Caco-2 (cell line): ENCODE measurements at regions of chr1 and their contacts with region 1.

Region 1: DNA sequence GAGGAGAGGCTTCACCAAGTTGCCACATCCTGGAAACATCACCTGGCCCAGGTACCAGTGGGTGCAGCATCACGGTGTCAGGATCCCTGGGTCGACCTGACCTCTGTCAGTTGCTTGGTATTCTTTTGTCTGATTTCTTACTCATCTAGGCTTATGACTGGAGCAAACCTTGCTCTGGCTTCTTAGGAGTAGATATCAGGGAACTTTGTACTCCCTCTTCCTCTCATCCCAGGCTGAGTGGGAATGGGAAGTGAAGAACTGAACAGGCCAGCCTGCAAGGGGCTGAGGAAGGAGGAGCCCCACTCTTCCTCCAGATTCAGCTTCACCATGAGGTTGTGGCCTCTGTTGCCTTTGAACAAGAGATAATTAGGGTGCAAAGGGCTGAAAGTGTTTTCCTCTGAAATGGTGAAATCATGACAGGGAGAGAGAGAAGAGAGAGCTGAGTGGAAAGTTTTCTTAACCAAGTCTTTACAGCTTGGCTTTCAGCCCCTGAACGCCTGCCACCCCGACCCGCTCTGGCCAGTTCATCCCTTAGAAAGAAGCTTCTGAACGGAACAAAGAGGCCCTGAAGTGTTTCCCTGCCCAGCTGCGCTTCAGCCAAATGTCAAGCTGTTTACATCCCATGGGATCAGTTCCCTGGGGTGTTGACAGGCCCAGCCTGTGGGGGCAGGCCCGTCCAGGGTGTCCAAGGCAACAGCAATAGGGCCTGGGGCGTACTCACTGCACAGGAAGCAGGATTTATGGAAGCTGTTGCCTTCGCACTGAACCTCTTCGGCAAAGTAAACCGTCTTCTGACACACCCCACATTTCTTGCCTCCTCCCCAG is 11.2 kb downstream of the CSRP1 start:
- DNase-seq: no peak
- H3K4me3 ChIP-seq: no peak overlapping the region
- H3K4me3 Mint-ChIP-seq: no peak overlapping the region
- H3K27ac Mint-ChIP-seq: no peak overlapping the region
- H3K4me1 ChIP-seq: peaks cover 21% of the 10 kb centered on the region
- H3K4me1 Mint-ChIP-seq: peaks cover 18% of the 10 kb centered on the region
- H3K27me3 ChIP-seq: no peaks in the 10 kb centered on the region
- H3K27me3 Mint-ChIP-seq: no peaks in the 10 kb centered on the region
- CTCF ChIP-seq: no peak

Region 2: GRCh38 chr1:201506556-201507359 is 11.1 kb after region 1 on chr1 and contains the start of gene CSRP1:
- CTCF ChIA-PET with region 1: interaction called, 13 read pairs
- POLR2A ChIA-PET with region 1: interaction called, 3 read pairs
- intact Hi-C with region 1: loop called (anchors 1 kb)
- DNase-seq: peak; percentile 72 to 78
- H3K4me3 ChIP-seq: peak within 1 kb of the TSS; percentile 60
- H3K4me3 Mint-ChIP-seq: peak within 1 kb of the TSS; percentile 82
- H3K27ac Mint-ChIP-seq: peak within 1 kb of the TSS; percentile 80
- H3K4me1 ChIP-seq: peaks cover 50% of the 10 kb centered on the region
- H3K4me1 Mint-ChIP-seq: peaks cover 31% of the 10 kb centered on the region
- H3K27me3 ChIP-seq: no peaks in the 10 kb centered on the region
- H3K27me3 Mint-ChIP-seq: no peaks in the 10 kb centered on the region
- CTCF ChIP-seq: no peak
- total RNA-seq, gene CSRP1: 60.0 and 60.8 TPM in 2 replicates

Region 3: GRCh38 chr1:201602413-201603265 is 107.0 kb after region 1 on chr1:
- CTCF ChIA-PET with region 1: no interaction called
- POLR2A ChIA-PET with region 1: no interaction called
- intact Hi-C with region 1: no loop called
- DNase-seq: no peak
- H3K4me3 ChIP-seq: no peak overlapping the region
- H3K4me3 Mint-ChIP-seq: no peak overlapping the region
- H3K27ac Mint-ChIP-seq: no peak overlapping the region
- H3K4me1 ChIP-seq: no peaks in the 10 kb centered on the region
- H3K4me1 Mint-ChIP-seq: peaks cover 7% of the 10 kb centered on the region
- H3K27me3 ChIP-seq: no peaks in the 10 kb centered on the region; the same call in 1 of the 2 replicates
- H3K27me3 Mint-ChIP-seq: peaks cover 16% of the 10 kb centered on the region
- CTCF ChIP-seq: no peak

Region 4: GRCh38 chr1:201877877-201878401 is 382.3 kb after region 1 on chr1:
- CTCF ChIA-PET with region 1: no interaction called
- POLR2A ChIA-PET with region 1: no interaction called
- intact Hi-C with region 1: no loop called
- DNase-seq: peak; percentile 52 to 57
- H3K4me3 ChIP-seq: no peak overlapping the region
- H3K4me3 Mint-ChIP-seq: no peak overlapping the region
- H3K27ac Mint-ChIP-seq: no peak overlapping the region
- H3K4me1 ChIP-seq: no peaks in the 10 kb centered on the region
- H3K4me1 Mint-ChIP-seq: peaks cover 14% of the 10 kb centered on the region
- H3K27me3 ChIP-seq: no peaks in the 10 kb centered on the region
- H3K27me3 Mint-ChIP-seq: no peaks in the 10 kb centered on the region
- CTCF ChIP-seq: peak; percentile 58 to 71